PC-3 (cell line): ENCODE measurements at regions of chrX and their contacts with region 1.

Region 1: DNA sequence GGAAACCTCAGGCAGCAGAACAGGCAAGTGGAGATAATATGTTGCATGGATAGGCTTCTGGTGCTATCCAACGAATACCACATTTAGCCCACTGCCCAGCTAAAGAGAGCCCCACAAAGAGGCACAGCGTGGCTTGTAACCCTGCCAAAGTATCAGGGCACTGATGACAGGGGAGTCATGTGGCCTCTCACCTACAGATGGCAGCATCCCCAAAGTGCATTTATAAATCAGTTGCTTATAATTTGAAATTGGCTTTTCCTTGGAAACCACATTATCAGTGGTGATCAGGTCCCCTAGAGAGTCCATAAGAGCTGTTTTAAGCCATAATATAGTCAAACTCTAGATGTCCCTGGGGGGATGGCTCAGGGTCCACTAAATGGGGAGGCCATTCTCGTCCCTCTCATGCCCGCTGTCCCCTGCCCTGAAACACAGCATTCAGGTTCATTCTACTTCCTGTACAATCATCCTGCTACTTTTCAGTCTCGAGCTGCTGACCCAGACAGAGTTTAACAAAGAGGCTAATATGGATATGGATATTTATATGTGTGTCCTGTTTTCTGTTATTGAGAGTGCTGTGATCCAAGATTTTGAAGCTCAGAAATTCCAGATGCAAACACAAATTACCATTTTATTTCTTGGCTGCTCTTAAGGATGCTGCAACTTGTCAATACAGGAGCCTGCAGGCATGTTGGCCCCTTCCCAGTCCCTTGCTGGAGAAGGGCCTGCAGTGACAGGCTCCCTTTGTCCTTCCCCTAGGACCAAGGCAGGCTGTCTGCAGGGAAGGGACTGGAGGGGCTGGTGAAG is 28.5 kb downstream of the SRPX start:
- DNase-seq: peak; percentile 44
- ATAC-seq: peak; percentile 55; the same call in 1 of the 2 replicates
- H3K4me3 ChIP-seq: no peak overlapping the region
- H3K27ac ChIP-seq: no peak overlapping the region
- H3K4me1 ChIP-seq: no peaks in the 10 kb centered on the region
- H3K27me3 ChIP-seq: no peaks in the 10 kb centered on the region
- CTCF ChIP-seq: peak; percentile 67

Region 2: GRCh38 chrX:38282044-38282443 is 89.8 kb after region 1 on chrX:
- CTCF ChIA-PET with region 1: interaction called, 15 read pairs
- POLR2A ChIA-PET with region 1: no interaction called
- intact Hi-C with region 1: no loop called
- DNase-seq: peak; percentile 7
- ATAC-seq: no peak; the same call in 1 of the 2 replicates
- H3K4me3 ChIP-seq: no peak overlapping the region
- H3K27ac ChIP-seq: no peak overlapping the region
- H3K4me1 ChIP-seq: peaks cover 25% of the 10 kb centered on the region
- H3K27me3 ChIP-seq: no peaks in the 10 kb centered on the region
- CTCF ChIP-seq: peak; percentile 45

Region 3: GRCh38 chrX:38293741-38294140 is 101.5 kb after region 1 on chrX:
- CTCF ChIA-PET with region 1: no interaction called
- POLR2A ChIA-PET with region 1: no interaction called
- intact Hi-C with region 1: loop called (anchors 1 kb)
- DNase-seq: peak; percentile 17
- ATAC-seq: no peak
- H3K4me3 ChIP-seq: no peak overlapping the region
- H3K27ac ChIP-seq: no peak overlapping the region
- H3K4me1 ChIP-seq: no peaks in the 10 kb centered on the region
- H3K27me3 ChIP-seq: no peaks in the 10 kb centered on the region
- CTCF ChIP-seq: peak; percentile 31; the same call in 1 of the 2 replicates